Activated T-helper 2 cell treated with anti-CD3 and anti-CD28 coated beads, Interferon-gamma antibody, Interleukin-2, Interleukin-4, amounts not matched to agents 10 μg/mL and 5 μg/mL and 100 μg/mL, durations not matched to agents 14 hours and 24 hours and 36 hours (primary cell): ENCODE measurements at regions of chr12 and their contacts with region 1.

Region 1: DNA sequence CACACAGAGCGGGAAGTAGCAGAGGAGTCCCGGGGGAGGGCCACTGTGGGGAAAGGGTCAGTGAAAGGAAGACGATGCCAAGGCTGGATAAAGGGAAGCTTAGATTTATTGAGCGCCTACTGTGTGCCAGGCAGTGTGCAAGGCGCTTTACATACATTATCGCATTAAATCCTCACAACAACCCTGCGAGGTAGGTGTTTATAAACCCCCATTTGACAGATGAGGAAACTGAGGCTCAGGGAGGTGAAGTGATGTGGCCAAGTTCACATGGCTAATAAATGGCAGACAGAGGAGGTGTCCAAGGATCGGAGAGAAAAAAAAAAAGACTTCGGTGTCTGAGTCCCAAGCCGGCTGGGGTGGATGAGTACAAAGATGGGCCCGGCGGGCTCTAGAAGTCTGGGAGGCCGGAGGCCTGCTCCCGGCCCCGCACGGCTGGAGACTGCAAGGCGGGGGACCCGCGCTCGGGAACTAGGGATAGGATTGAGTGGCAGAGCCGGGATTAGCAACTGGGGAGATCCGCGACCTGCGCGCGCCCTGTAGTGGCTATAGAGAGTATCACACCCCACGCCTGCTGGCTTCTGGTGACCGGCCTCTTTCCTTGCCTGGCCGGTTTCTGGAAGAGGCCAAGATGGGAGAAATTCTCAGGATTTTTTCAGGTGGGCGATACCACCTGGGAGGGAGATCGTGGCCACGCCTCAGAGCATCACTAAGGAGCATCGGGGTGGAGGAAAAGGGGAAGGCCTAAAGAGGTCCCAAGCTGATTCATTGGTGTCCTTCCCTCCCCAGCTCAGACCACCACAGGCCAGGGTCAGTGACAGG is 3.9 kb downstream of the DDN start:
- DNase-seq: no peak
- H3K4me3 Mint-ChIP-seq: no peak overlapping the region
- H3K27ac Mint-ChIP-seq: no peak overlapping the region
- H3K4me1 Mint-ChIP-seq: peaks cover 26% of the 10 kb centered on the region
- H3K27me3 Mint-ChIP-seq: peaks cover 55% of the 10 kb centered on the region

Region 2: GRCh38 chr12:48890657-48891418 is 104.4 kb before region 1 on chr12:
- intact Hi-C with region 1: loop called (anchors 5 kb)
- DNase-seq: peak; percentile 67
- H3K4me3 Mint-ChIP-seq: no peak overlapping the region
- H3K27ac Mint-ChIP-seq: no peak overlapping the region
- H3K4me1 Mint-ChIP-seq: peaks cover 7% of the 10 kb centered on the region
- H3K27me3 Mint-ChIP-seq: peaks cover 19% of the 10 kb centered on the region

Region 3: GRCh38 chr12:48936379-48936979 is 58.8 kb before region 1 on chr12:
- intact Hi-C with region 1: loop called (anchors 5 kb)
- DNase-seq: peak; percentile 62
- H3K4me3 Mint-ChIP-seq: no peak overlapping the region
- H3K27ac Mint-ChIP-seq: no peak overlapping the region
- H3K4me1 Mint-ChIP-seq: peaks cover 12% of the 10 kb centered on the region
- H3K27me3 Mint-ChIP-seq: no peaks in the 10 kb centered on the region

Region 4: GRCh38 chr12:48957141-48958048 is 37.9 kb before region 1 on chr12 and contains the start of gene ARF3:
- intact Hi-C with region 1: loop called (anchors 1 kb)
- DNase-seq: peak; percentile 90
- H3K4me3 Mint-ChIP-seq: peak within 1 kb of the TSS; percentile 95
- H3K27ac Mint-ChIP-seq: peak within 1 kb of the TSS; percentile 82
- H3K4me1 Mint-ChIP-seq: peaks cover 29% of the 10 kb centered on the region
- H3K27me3 Mint-ChIP-seq: peaks cover 18% of the 10 kb centered on the region
- total RNA-seq, gene ARF3: 133 and 135 TPM in 2 replicates

Region 5: GRCh38 chr12:48977315-48978281 is 17.7 kb before region 1 on chr12:
- intact Hi-C with region 1: loop called (anchors 1 kb)
- DNase-seq: peak; percentile 61
- H3K4me3 Mint-ChIP-seq: peak overlapping the region; percentile 2
- H3K27ac Mint-ChIP-seq: peak overlapping the region; percentile 62
- H3K4me1 Mint-ChIP-seq: peaks cover 47% of the 10 kb centered on the region
- H3K27me3 Mint-ChIP-seq: peaks cover 82% of the 10 kb centered on the region

Region 6: DNA sequence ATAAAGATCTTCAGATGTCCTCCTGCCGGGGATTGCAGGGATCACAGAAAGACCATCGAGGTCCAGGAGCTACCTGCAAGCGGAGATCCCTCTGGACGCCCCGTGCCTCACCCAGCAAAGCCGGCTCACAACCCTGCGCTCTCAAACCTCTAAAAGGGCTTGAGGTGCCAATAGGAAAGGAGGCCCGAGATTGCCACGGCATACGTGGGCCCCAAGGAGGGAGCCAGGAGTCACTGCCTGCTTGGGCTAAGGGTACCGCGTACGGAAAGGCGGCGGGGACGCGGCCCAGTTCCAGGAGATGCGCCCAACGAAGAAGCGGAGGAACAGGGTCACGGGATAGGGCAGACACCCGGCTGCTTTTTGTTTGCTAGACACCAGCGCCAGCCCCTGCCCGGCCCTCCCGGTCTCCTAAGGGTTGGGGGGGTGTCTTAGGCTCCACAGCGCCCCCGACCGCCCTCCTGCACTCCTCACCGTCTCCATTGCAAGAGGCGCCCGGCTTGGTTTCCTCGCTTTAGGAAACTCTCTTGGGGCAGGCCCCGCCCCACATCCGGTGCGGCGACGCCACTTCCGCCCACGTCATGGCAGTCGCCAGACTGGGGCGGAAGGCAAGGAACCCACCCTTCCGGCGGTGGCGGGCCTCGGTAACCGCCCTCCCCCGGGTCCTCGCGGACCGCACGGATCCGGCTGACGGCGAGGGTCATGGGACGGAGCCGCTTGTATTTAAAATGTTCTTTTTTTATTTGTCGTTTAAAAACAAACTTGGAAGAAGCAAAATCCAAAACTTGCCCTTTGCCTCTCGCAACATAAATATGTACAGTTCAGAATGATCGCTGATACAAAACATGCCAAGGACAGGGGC is 23.2 kb after region 1 on chr12 and contains the start of gene PRKAG1:
- intact Hi-C with region 1: loop called (anchors 1 kb)
- DNase-seq: peak; percentile 96
- H3K4me3 Mint-ChIP-seq: peak within 1 kb of the TSS; percentile 90
- H3K27ac Mint-ChIP-seq: peak within 1 kb of the TSS; percentile 93
- H3K4me1 Mint-ChIP-seq: peaks cover 25% of the 10 kb centered on the region
- H3K27me3 Mint-ChIP-seq: no peaks in the 10 kb centered on the region
- total RNA-seq, gene PRKAG1: 65.1 and 65.7 TPM in 2 replicates

Region 7: GRCh38 chr12:50025187-50026059 is 1030.2 kb after region 1 on chr12 and contains the start of gene RACGAP1:
- intact Hi-C with region 1: no loop called
- DNase-seq: peak; percentile 96
- H3K4me3 Mint-ChIP-seq: peak within 1 kb of the TSS; percentile 99
- H3K27ac Mint-ChIP-seq: peak within 1 kb of the TSS; percentile 98
- H3K4me1 Mint-ChIP-seq: peaks cover 30% of the 10 kb centered on the region
- H3K27me3 Mint-ChIP-seq: no peaks in the 10 kb centered on the region
- total RNA-seq, gene RACGAP1: 77.8 and 82.8 TPM in 2 replicates